MCF 10A (cell line): ENCODE measurements at regions of chr4 and their contacts with region 1.

Region 1: GRCh38 chr4:77618383-77619122 is 12.9 kb downstream of the CXCL13 start:
- DNase-seq: peak; percentile 78
- H3K4me3 Mint-ChIP-seq: no peak overlapping the region
- H3K27ac Mint-ChIP-seq: peak overlapping the region; percentile 71
- H3K4me1 Mint-ChIP-seq: peaks cover 16% of the 10 kb centered on the region
- H3K27me3 Mint-ChIP-seq: no peaks in the 10 kb centered on the region
- CTCF ChIP-seq: peak; percentile 74

Region 2: GRCh38 chr4:77385124-77385969 is 233.2 kb before region 1 on chr4:
- CTCF ChIA-PET with region 1: interaction called, 108 read pairs
- POLR2A ChIA-PET with region 1: interaction called, 4 read pairs
- intact Hi-C with region 1: loop called (anchors 1 kb)
- DNase-seq: peak; percentile 77
- H3K4me3 Mint-ChIP-seq: no peak overlapping the region
- H3K27ac Mint-ChIP-seq: no peak overlapping the region
- H3K4me1 Mint-ChIP-seq: no peaks in the 10 kb centered on the region
- H3K27me3 Mint-ChIP-seq: peaks cover 11% of the 10 kb centered on the region
- CTCF ChIP-seq: peak; percentile 74

Region 3: DNA sequence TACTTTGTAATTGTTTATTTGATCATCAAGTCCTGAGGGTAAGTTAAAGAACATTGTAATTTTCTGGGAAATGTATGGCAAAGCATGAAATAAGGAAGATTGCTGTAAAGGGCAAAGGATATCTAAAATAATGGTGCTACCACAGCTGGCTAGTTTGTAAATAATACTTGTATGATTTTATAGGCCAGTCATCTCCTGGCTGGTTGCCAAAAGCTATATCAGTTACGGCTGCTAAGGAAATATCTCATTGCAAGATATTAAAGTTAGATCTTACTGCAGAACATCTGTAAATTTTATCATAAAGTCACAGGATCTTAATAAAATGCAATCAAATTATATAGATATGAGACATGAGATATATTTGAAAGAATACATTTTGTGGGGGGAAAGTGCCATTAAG is 163.7 kb before region 1 on chr4:
- CTCF ChIA-PET with region 1: interaction called, 3 read pairs
- POLR2A ChIA-PET with region 1: no interaction called
- intact Hi-C with region 1: loop called (anchors 5 kb)
- DNase-seq: peak; percentile 24
- H3K4me3 Mint-ChIP-seq: no peak overlapping the region
- H3K27ac Mint-ChIP-seq: no peak overlapping the region
- H3K4me1 Mint-ChIP-seq: peaks cover 10% of the 10 kb centered on the region
- H3K27me3 Mint-ChIP-seq: no peaks in the 10 kb centered on the region
- CTCF ChIP-seq: no peak

Region 4: GRCh38 chr4:77473509-77473908 is 145.0 kb before region 1 on chr4:
- CTCF ChIA-PET with region 1: interaction called, 30 read pairs
- POLR2A ChIA-PET with region 1: no interaction called
- intact Hi-C with region 1: no loop called
- DNase-seq: peak; percentile 51
- H3K4me3 Mint-ChIP-seq: no peak overlapping the region
- H3K27ac Mint-ChIP-seq: no peak overlapping the region
- H3K4me1 Mint-ChIP-seq: peaks cover 6% of the 10 kb centered on the region
- H3K27me3 Mint-ChIP-seq: no peaks in the 10 kb centered on the region
- CTCF ChIP-seq: peak; percentile 58

Region 5: GRCh38 chr4:77636902-77637301 is 18.3 kb after region 1 on chr4:
- CTCF ChIA-PET with region 1: interaction called, 10 read pairs
- POLR2A ChIA-PET with region 1: no interaction called
- intact Hi-C with region 1: no loop called
- DNase-seq: peak; percentile 97
- H3K4me3 Mint-ChIP-seq: no peak overlapping the region
- H3K27ac Mint-ChIP-seq: peak overlapping the region; percentile 75
- H3K4me1 Mint-ChIP-seq: peaks cover 10% of the 10 kb centered on the region
- H3K27me3 Mint-ChIP-seq: no peaks in the 10 kb centered on the region
- CTCF ChIP-seq: no peak

Region 6: DNA sequence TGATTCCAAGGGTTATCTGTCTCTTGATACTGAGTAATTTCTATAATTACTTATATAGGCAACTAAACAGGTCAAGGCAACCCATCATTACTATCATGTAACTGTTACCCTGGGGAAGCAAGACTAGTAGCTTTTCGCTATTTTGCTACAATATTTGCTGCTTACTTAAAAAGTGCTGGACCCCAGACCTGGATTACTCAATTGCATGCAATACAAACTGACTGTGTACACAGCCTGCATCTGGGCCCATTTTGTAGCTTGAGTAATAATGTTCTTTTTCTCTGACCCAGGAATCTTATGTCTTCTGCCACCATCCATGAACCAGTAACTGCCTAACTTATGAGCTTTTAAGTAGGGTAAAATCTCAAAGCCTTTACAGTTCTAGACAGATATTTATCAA is 147.2 kb after region 1 on chr4:
- CTCF ChIA-PET with region 1: no interaction called
- POLR2A ChIA-PET with region 1: no interaction called
- intact Hi-C with region 1: no loop called
- DNase-seq: no peak
- H3K4me3 Mint-ChIP-seq: no peak overlapping the region
- H3K27ac Mint-ChIP-seq: no peak overlapping the region
- H3K4me1 Mint-ChIP-seq: peaks cover 6% of the 10 kb centered on the region
- H3K27me3 Mint-ChIP-seq: no peaks in the 10 kb centered on the region
- CTCF ChIP-seq: no peak

Region 7: GRCh38 chr4:77862478-77863216 is 244.1 kb after region 1 on chr4 and contains the start of gene MRPL1:
- CTCF ChIA-PET with region 1: no interaction called
- POLR2A ChIA-PET with region 1: interaction called, 3 read pairs
- intact Hi-C with region 1: loop called (anchors 5 kb)
- DNase-seq: peak; percentile 96
- H3K4me3 Mint-ChIP-seq: peak within 1 kb of the TSS; percentile 90
- H3K27ac Mint-ChIP-seq: peak within 1 kb of the TSS; percentile 99
- H3K4me1 Mint-ChIP-seq: peaks cover 15% of the 10 kb centered on the region
- H3K27me3 Mint-ChIP-seq: no peaks in the 10 kb centered on the region
- CTCF ChIP-seq: no peak
- total RNA-seq, gene MRPL1: 36.8 and 53.3 TPM in 2 replicates

Region 8: GRCh38 chr4:78584863-78585547 is 966.5 kb after region 1 on chr4:
- CTCF ChIA-PET with region 1: no interaction called
- POLR2A ChIA-PET with region 1: no interaction called
- intact Hi-C with region 1: no loop called
- DNase-seq: peak; percentile 26
- H3K4me3 Mint-ChIP-seq: no peak overlapping the region
- H3K27ac Mint-ChIP-seq: peak overlapping the region; percentile 16
- H3K4me1 Mint-ChIP-seq: no peaks in the 10 kb centered on the region
- H3K27me3 Mint-ChIP-seq: no peaks in the 10 kb centered on the region
- CTCF ChIP-seq: no peak